B cell (primary cell): ENCODE measurements at regions of chr9 and their contacts with region 1.

Region 1: DNA sequence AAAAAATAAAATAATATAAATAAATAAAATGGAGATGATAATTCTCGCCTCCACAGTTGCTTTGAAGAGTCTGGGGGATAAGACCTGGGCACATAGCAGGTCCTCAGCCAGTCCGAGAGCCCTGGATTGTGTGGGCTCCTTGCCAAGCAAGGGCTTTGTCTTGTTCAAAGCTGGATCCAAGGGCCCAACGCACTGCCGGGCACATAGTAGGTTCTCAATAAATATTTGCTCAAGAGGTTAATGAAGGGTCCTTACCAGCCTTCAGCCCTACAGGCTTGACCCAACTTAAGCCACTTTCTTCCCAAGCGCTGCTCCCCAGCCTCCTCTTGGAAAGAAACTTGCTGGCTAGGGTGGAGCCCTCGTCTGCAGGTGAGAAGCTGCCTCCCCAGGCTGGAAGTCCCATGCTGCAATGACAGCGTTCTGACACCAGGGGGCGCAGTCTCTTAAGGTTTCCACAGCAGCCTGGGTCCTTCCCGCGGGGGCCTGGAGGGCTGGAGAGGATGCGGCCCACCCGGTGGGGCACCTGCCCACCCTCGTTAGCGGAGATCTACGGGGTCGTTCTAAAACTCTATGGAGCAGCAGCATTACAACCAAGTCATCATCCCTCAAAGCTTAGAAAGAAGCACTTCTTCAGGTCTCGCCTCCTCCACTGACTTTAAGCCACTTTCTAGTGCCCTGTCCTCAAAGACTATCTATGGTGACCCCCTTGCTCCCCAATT is 115.2 kb downstream of the LHX2 start:
- DNase-seq: peak; percentile 87
- ATAC-seq: peak; percentile 88
- H3K4me3 ChIP-seq: no peak overlapping the region
- H3K4me3 Mint-ChIP-seq: peak overlapping the region; percentile 2
- H3K27ac ChIP-seq: no peak overlapping the region
- H3K27ac Mint-ChIP-seq: peak overlapping the region; percentile 74
- H3K4me1 ChIP-seq: peaks cover 4 to 16% of the 10 kb centered on the region in 2 donors
- H3K4me1 Mint-ChIP-seq: peaks cover 21% of the 10 kb centered on the region
- H3K27me3 ChIP-seq: no peaks in the 10 kb centered on the region
- H3K27me3 Mint-ChIP-seq: no peaks in the 10 kb centered on the region
- CTCF ChIP-seq: peak; percentile 99

Region 2: DNA sequence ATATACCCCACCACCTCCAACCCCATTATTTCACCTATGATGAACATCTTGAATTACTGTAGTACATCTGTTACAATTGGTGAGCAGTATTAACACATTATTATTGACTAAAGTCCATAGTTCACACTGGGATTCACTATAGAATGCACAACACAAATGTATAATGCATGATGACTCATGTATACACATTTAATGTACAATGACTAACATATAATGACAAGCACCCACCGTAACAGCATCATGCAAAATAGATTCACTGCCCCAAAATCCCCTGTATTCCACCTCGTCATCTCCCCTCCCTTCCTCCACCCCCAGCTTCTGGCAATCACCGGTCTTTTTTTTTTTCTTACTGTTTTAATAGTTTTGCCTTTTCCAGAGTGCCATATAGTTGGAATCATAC is 84.0 kb after region 1 on chr9:
- CTCF ChIA-PET with region 1: interaction called, 26 read pairs
- POLR2A ChIA-PET with region 1: no interaction called
- intact Hi-C with region 1: no loop called
- DNase-seq: peak; percentile 79
- ATAC-seq: peak; percentile 75
- H3K4me3 ChIP-seq: no peak overlapping the region
- H3K4me3 Mint-ChIP-seq: peak overlapping the region; percentile 69
- H3K27ac ChIP-seq: peak overlapping the region; percentile 26 to 69
- H3K27ac Mint-ChIP-seq: peak overlapping the region; percentile 80
- H3K4me1 ChIP-seq: peaks cover 82 to 88% of the 10 kb centered on the region in 2 donors
- H3K4me1 Mint-ChIP-seq: peaks cover 93% of the 10 kb centered on the region
- H3K27me3 ChIP-seq: no peaks in the 10 kb centered on the region
- H3K27me3 Mint-ChIP-seq: no peaks in the 10 kb centered on the region
- CTCF ChIP-seq: no peak

Region 3: GRCh38 chr9:124257844-124258606 is 131.3 kb after region 1 on chr9 and contains the start of gene NEK6:
- CTCF ChIA-PET with region 1: interaction called, 16 read pairs
- POLR2A ChIA-PET with region 1: no interaction called
- intact Hi-C with region 1: loop called (anchors 2 kb)
- DNase-seq: peak; percentile 75
- ATAC-seq: peak; percentile 60
- H3K4me3 ChIP-seq: peak within 1 kb of the TSS; percentile 65 to 97 (median 81)
- H3K4me3 Mint-ChIP-seq: peak within 1 kb of the TSS; percentile 100
- H3K27ac ChIP-seq: peak within 1 kb of the TSS; percentile 49 to 71
- H3K27ac Mint-ChIP-seq: peak within 1 kb of the TSS; percentile 98
- H3K4me1 ChIP-seq: peaks cover 42 to 67% of the 10 kb centered on the region in 2 donors
- H3K4me1 Mint-ChIP-seq: peaks cover 71% of the 10 kb centered on the region
- H3K27me3 ChIP-seq: no peaks in the 10 kb centered on the region
- H3K27me3 Mint-ChIP-seq: no peaks in the 10 kb centered on the region
- CTCF ChIP-seq: no peak
- total RNA-seq, gene NEK6: 63.1 and 66.3 TPM in 2 replicates

Region 4: DNA sequence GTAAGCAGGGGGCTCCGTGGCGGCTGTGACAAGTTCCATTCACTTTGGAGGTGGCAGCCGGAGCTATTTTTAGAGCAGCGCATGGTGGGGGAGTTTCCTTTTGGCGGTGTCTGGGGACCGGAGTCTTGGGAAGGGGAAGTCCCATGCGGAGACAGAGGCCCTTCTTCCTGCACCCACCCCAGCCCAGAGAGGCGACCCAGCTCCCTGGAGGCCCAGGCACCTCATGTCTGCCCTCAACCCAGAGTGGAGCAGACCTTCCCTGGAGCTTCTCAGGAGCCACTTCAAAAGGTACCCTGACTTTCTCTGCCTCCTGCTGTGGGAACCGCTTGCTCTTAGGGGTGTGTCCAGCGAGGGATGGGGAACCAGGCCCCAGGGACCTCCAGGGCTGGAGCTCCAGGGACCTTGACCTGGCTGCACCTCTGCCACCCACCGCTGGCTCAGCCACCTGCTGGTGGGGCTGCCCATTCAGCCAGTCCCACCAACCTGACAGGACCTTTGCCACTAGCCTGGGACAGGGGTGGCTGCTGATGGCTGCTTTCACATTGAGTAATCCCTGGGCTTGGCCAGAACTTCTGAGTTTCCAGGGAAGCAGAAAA is 165.2 kb after region 1 on chr9:
- CTCF ChIA-PET with region 1: interaction called, 60 read pairs
- POLR2A ChIA-PET with region 1: interaction called, 5 read pairs
- intact Hi-C with region 1: loop called (anchors 1 kb)
- DNase-seq: peak; percentile 79
- ATAC-seq: peak; percentile 54
- H3K4me3 ChIP-seq: peak overlapping the region in 3 of 5 experiments; percentile 10 to 25 (median 20)
- H3K4me3 Mint-ChIP-seq: peak overlapping the region; percentile 43
- H3K27ac ChIP-seq: peak overlapping the region; percentile 55 to 63
- H3K27ac Mint-ChIP-seq: peak overlapping the region; percentile 80
- H3K4me1 ChIP-seq: peaks cover 68 to 87% of the 10 kb centered on the region in 2 donors
- H3K4me1 Mint-ChIP-seq: peaks cover 91% of the 10 kb centered on the region
- H3K27me3 ChIP-seq: no peaks in the 10 kb centered on the region
- H3K27me3 Mint-ChIP-seq: no peaks in the 10 kb centered on the region
- CTCF ChIP-seq: peak; percentile 35

Region 5: DNA sequence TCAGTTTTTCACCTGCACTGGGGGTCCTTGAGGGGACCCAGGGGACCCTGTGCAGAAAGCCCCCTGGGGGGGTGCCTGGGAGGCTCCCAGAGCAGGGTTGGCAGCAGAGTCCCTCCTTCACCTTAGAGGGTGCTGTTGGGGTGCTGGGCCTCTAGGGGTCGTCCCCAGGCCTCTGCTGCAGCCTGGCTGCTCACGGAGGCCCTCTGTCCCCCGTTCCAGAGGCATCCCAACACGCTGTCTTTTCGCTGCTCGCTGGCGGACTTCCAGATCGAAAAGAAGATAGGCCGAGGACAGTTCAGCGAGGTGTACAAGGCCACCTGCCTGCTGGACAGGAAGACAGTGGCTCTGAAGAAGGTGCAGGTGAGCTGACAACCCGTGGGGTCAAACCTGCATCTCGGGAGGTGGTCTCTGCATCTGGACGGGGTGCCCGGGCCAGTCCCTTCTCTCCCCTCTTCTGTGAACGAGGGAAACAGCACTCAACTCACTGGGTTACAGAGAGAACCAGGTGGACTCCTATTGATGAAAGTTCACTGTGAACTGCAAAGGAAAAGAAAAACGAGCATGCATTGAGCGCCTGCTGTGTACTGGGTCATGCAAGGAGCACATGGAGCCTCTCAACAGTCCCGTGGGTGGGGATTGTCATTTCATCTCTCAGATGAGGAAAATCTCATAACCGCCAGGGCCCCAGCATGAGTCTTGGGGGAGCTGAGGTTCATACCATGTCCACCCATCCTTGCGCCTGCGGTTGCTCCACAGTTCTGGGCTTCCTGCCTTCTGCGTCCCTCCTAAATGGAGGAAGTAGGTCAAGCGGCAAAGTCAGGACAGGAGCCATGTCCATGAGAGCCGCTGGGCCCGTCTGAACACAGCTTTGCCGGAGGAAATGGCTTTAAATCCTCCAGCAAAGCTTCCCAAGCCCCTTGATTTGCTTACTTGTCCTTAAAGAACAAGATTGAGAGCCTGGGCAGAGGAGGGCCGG is 185.8 kb after region 1 on chr9:
- CTCF ChIA-PET with region 1: interaction called, 59 read pairs
- POLR2A ChIA-PET with region 1: interaction called, 3 read pairs
- intact Hi-C with region 1: no loop called
- DNase-seq: no peak
- ATAC-seq: no peak
- H3K4me3 ChIP-seq: no peak overlapping the region
- H3K4me3 Mint-ChIP-seq: no peak overlapping the region
- H3K27ac ChIP-seq: no peak overlapping the region
- H3K27ac Mint-ChIP-seq: no peak overlapping the region
- H3K4me1 ChIP-seq: peaks cover 0 to 5% of the 10 kb centered on the region in 2 donors
- H3K4me1 Mint-ChIP-seq: peaks cover 8% of the 10 kb centered on the region
- H3K27me3 ChIP-seq: no peaks in the 10 kb centered on the region
- H3K27me3 Mint-ChIP-seq: no peaks in the 10 kb centered on the region
- CTCF ChIP-seq: no peak

Region 6: DNA sequence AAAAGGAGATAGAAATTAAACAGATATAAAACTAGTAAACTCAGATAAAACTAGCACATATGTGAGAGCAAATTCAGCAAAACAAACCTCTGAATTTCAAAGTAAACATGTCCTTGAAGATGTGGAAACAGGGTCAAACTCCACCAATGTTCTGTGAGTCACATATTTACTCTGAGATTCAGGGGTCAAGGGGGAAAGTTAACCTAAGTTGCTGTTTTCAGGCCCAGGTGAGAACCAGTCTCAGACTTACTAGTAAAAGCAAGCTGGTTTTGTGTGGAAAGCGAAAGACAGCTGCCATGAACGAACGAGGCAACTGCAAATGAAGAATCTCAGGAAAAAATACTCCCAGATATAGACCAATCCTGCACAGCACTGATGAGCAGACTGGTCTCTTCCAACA is 259.5 kb after region 1 on chr9:
- CTCF ChIA-PET with region 1: interaction called, 54 read pairs
- POLR2A ChIA-PET with region 1: no interaction called
- intact Hi-C with region 1: loop called (anchors 1 kb)
- DNase-seq: no peak
- ATAC-seq: no peak
- H3K4me3 ChIP-seq: no peak overlapping the region
- H3K4me3 Mint-ChIP-seq: no peak overlapping the region
- H3K27ac ChIP-seq: no peak overlapping the region
- H3K27ac Mint-ChIP-seq: no peak overlapping the region
- H3K4me1 ChIP-seq: no peaks in the 10 kb centered on the region
- H3K4me1 Mint-ChIP-seq: peaks cover 31% of the 10 kb centered on the region
- H3K27me3 ChIP-seq: no peaks in the 10 kb centered on the region
- H3K27me3 Mint-ChIP-seq: no peaks in the 10 kb centered on the region
- CTCF ChIP-seq: no peak

Region 7: DNA sequence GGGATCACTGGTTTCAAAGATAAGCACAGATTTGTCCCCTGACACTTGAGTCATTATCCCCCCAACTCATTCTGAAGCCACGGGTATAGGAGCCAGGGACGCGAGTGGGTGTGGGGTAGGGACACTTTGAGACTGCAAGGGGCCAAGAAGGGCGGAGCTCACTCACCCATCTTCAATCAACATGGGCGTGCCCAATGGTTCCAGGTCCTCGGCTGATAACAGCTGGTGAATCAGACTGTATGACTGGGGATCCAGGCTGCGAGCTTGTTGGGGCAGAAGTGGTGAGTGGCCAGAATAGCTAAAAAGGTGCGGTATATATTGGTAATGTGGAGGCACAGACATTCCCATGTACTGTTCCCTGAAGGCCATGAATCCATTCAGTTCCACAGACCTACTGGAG is 411.2 kb after region 1 on chr9:
- CTCF ChIA-PET with region 1: interaction called, 14 read pairs
- POLR2A ChIA-PET with region 1: no interaction called
- intact Hi-C with region 1: loop called (anchors 2 kb)
- DNase-seq: no peak
- ATAC-seq: no peak
- H3K4me3 ChIP-seq: no peak overlapping the region
- H3K4me3 Mint-ChIP-seq: no peak overlapping the region
- H3K27ac ChIP-seq: no peak overlapping the region
- H3K27ac Mint-ChIP-seq: no peak overlapping the region
- H3K4me1 ChIP-seq: no peaks in the 10 kb centered on the region
- H3K4me1 Mint-ChIP-seq: no peaks in the 10 kb centered on the region
- H3K27me3 ChIP-seq: no peaks in the 10 kb centered on the region
- H3K27me3 Mint-ChIP-seq: no peaks in the 10 kb centered on the region
- CTCF ChIP-seq: no peak